Caco-2 (cell line): ENCODE measurements at regions of chr4 and their contacts with region 1.

Region 1: GRCh38 chr4:78951862-78952472 is 12.7 kb upstream of the PAQR3 start:
- DNase-seq: peak in 1 of 2 experiments; percentile 49
- H3K4me3 ChIP-seq: no peak overlapping the region
- H3K4me3 Mint-ChIP-seq: no peak overlapping the region
- H3K27ac Mint-ChIP-seq: no peak overlapping the region
- H3K4me1 ChIP-seq: no peaks in the 10 kb centered on the region
- H3K4me1 Mint-ChIP-seq: no peaks in the 10 kb centered on the region
- H3K27me3 ChIP-seq: no peaks in the 10 kb centered on the region
- H3K27me3 Mint-ChIP-seq: peaks cover 18% of the 10 kb centered on the region
- CTCF ChIP-seq: peak; percentile 53 to 55

Region 2: DNA sequence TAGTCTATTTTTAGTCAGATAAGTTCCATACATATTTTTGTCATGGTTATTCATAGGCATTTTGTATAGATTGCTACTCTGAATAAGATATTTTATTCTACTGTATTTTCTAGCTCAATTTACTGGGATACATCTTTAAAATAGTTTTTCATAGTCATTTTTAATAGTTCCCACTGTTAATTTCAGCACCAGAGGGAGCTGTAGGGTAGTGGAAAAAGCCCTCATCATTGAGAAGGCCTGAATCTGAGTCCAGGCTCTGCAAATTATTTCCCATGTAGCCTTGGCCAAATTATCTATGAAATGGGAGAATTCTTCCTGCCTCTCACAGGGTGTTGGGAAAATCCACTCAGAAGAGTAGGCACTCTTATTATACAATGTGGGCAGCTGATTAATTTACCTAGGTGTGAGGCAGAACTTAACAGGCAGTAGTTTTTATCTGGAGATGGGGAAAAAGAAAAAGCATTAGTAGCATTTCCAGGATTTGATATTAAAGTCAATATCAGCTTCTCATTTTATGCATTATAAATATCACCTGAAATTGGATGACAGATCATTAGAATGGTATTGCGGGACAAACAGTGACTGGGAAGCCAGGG is 90.2 kb after region 1 on chr4:
- CTCF ChIA-PET with region 1: no interaction called
- POLR2A ChIA-PET with region 1: no interaction called
- intact Hi-C with region 1: loop called (anchors 2 kb)
- DNase-seq: peak in 1 of 2 experiments; percentile 31
- H3K4me3 ChIP-seq: no peak overlapping the region
- H3K4me3 Mint-ChIP-seq: no peak overlapping the region
- H3K27ac Mint-ChIP-seq: no peak overlapping the region
- H3K4me1 ChIP-seq: peaks cover 4% of the 10 kb centered on the region; the same call in 1 of the 2 replicates
- H3K4me1 Mint-ChIP-seq: peaks cover 13% of the 10 kb centered on the region
- H3K27me3 ChIP-seq: no peaks in the 10 kb centered on the region
- H3K27me3 Mint-ChIP-seq: no peaks in the 10 kb centered on the region
- CTCF ChIP-seq: peak; percentile 44 to 50

Region 3: GRCh38 chr4:79281566-79282359 is 329.8 kb after region 1 on chr4:
- CTCF ChIA-PET with region 1: no interaction called
- POLR2A ChIA-PET with region 1: no interaction called
- intact Hi-C with region 1: loop called (anchors 2 kb)
- DNase-seq: no peak
- H3K4me3 ChIP-seq: no peak overlapping the region
- H3K4me3 Mint-ChIP-seq: no peak overlapping the region
- H3K27ac Mint-ChIP-seq: no peak overlapping the region
- H3K4me1 ChIP-seq: no peaks in the 10 kb centered on the region
- H3K4me1 Mint-ChIP-seq: no peaks in the 10 kb centered on the region
- H3K27me3 ChIP-seq: no peaks in the 10 kb centered on the region
- H3K27me3 Mint-ChIP-seq: peaks cover 5% of the 10 kb centered on the region
- CTCF ChIP-seq: no peak

Region 4: DNA sequence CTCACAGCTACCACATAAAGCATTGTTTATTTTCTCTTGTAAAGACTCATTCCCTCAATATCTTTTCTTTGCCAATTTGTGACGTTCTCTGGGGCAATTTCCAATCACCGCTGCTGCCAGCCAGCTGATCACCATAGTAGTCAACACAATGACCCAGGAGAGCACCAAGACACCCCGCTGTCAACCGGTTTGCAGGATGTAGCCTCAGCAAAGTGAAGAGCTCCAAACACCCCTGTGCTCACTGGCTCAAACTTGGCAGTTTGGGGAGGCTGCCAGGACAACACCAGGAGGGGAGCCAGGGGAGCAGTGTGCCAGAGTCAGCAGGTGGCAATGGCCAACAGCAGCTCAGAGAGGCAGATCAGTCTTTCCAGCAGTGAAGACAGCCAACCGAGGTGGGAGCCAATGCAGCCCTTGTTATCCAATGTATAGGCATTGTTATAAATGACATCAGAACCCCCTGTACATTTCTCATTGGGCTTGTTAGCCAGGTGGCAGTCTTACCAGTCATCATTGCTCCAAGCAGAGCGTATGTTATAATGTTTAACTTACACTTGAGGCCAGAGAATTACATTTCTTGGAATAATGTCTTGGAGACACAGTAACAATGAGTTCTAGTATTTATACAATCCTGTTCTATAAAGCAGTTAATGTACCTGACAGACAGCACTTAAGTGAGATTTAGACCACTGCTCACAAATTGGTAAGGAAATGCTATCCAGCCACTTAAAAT is 731.0 kb after region 1 on chr4:
- CTCF ChIA-PET with region 1: no interaction called
- POLR2A ChIA-PET with region 1: no interaction called
- intact Hi-C with region 1: loop called (anchors 10 kb)
- DNase-seq: no peak
- H3K4me3 ChIP-seq: no peak overlapping the region
- H3K4me3 Mint-ChIP-seq: no peak overlapping the region
- H3K27ac Mint-ChIP-seq: no peak overlapping the region
- H3K4me1 ChIP-seq: no peaks in the 10 kb centered on the region
- H3K4me1 Mint-ChIP-seq: peaks cover 6% of the 10 kb centered on the region
- H3K27me3 ChIP-seq: no peaks in the 10 kb centered on the region
- H3K27me3 Mint-ChIP-seq: peaks cover 3% of the 10 kb centered on the region
- CTCF ChIP-seq: no peak

Region 5: DNA sequence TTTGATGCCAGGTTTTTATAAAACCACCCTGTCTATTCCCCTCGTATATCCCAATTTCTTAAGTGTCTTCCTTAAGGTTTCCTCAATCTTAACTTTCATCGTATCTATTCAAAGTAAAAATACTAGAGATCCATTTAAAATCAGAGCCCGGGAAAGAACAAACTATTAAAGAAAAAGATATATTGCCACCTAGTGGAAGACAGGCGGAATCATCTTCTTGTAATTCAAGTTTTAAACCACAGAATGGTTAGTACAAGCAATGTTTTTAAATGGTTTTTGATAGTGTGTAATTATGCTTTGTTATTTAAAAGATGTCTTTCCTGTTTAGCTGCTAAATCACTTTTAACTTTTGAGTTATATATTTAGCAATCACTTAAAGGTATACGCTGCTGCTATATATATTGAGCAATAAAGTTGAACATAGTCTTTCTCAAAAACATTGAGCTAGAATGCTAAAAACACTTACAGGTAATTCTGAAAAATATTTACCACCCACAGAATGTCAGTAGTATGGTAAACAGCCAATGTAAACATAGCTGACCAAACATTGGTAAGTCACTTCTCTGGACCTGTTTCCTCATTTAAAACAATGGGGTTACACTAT is 1263.6 kb after region 1 on chr4:
- CTCF ChIA-PET with region 1: no interaction called
- POLR2A ChIA-PET with region 1: no interaction called
- intact Hi-C with region 1: loop called (anchors 1 kb)
- DNase-seq: no peak
- H3K4me3 ChIP-seq: no peak overlapping the region
- H3K4me3 Mint-ChIP-seq: no peak overlapping the region
- H3K27ac Mint-ChIP-seq: no peak overlapping the region
- H3K4me1 ChIP-seq: no peaks in the 10 kb centered on the region
- H3K4me1 Mint-ChIP-seq: no peaks in the 10 kb centered on the region
- H3K27me3 ChIP-seq: no peaks in the 10 kb centered on the region
- H3K27me3 Mint-ChIP-seq: peaks cover 3% of the 10 kb centered on the region
- CTCF ChIP-seq: peak; percentile 48 to 56